ENCODE measurements at regions of chr22 and their contacts with region 1.

Region 1: DNA sequence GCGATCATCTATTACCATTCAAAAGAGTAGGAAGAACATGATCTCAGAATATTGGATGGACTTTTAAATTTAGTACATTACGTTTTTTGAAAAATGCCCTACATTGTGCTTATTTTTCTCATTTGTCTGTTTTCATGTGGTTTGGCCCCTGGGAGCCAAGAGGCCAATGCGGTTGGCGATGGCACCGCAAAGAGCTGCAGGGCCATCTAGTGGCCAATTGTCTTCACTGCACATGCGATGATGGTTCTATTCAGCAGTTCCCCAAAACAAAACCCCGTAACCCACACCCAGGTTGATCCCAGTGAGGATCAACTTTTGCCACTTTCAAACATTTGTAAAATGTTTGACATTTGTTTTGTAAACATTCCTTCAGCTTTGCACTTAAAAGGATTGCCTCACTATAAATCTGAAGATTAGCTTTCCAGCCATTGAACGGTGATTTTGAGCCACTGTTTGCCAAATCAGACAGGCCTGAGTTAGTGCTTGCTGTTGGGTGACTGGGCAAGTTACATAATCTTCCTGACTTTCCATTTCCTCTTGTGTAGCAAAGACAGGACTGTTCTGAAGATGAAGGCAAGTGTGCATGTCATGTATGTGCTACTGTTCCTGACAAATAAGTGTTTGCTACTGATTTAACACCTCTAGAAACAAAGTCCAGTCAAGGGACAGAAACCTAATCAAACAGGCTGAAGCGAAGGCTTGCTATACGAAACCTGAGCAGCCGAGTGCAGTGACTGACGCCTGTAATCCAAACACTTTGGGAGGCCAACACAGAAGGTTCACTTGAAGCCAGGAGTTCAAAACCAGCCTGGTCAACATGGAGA is 29.2 kb upstream of the XBP1 start:
- DNase-seq: peak; percentile 84
- ATAC-seq: peak; percentile 72
- H3K4me3 Mint-ChIP-seq: no peak overlapping the region
- H3K27ac Mint-ChIP-seq: no peak overlapping the region
- H3K4me1 Mint-ChIP-seq: peaks cover 18% of the 10 kb centered on the region
- H3K27me3 Mint-ChIP-seq: no peaks in the 10 kb centered on the region
- CTCF ChIP-seq: peak; percentile 98

Region 2: DNA sequence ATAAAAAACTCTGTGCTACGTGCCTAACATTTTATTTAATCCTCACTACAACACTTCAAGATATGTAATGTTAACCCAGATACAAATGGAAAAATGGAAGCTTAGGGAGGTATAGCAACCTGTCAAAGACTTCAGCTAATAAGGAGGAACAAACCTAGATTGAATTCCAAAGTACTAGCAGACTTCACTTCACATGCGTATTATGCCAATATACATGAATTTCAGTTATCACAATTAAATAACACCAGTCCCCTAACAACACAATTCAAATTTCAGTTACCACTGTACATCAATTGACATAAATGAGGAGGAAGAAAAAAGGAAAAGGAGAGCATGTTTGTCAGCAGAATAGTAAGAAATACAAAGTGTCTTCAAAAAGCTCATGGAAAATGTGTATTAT is 210.3 kb before region 1 on chr22:
- CTCF ChIA-PET with region 1: interaction called, 10 read pairs
- POLR2A ChIA-PET with region 1: no interaction called
- intact Hi-C with region 1: no loop called
- DNase-seq: no peak
- ATAC-seq: no peak
- H3K4me3 Mint-ChIP-seq: no peak overlapping the region
- H3K27ac Mint-ChIP-seq: no peak overlapping the region
- H3K4me1 Mint-ChIP-seq: no peaks in the 10 kb centered on the region
- H3K27me3 Mint-ChIP-seq: peaks cover 32% of the 10 kb centered on the region
- CTCF ChIP-seq: no peak

Region 3: DNA sequence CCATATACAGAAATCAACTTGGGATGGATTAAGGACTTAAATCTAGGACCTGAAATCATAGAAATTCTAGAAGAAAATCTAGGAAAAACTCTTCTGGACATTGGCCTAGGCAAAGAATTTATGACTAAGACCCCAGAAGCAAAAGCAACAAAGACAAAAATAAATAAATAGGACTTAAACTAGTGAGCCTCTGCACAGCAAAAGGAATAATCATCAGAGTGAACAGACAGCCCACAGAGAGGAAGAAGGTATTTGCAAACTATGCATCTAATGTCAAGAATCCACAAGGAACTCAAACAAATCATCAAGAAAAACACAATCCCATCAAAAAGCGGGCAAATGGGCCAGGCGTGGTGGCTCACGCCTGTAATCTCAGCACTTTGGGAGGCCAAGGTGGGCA is 182.4 kb before region 1 on chr22:
- CTCF ChIA-PET with region 1: no interaction called
- POLR2A ChIA-PET with region 1: no interaction called
- intact Hi-C with region 1: no loop called
- DNase-seq: no peak
- ATAC-seq: no peak
- H3K4me3 Mint-ChIP-seq: no peak overlapping the region
- H3K27ac Mint-ChIP-seq: no peak overlapping the region
- H3K4me1 Mint-ChIP-seq: no peaks in the 10 kb centered on the region
- H3K27me3 Mint-ChIP-seq: peaks cover 49% of the 10 kb centered on the region
- CTCF ChIP-seq: no peak

Region 4: DNA sequence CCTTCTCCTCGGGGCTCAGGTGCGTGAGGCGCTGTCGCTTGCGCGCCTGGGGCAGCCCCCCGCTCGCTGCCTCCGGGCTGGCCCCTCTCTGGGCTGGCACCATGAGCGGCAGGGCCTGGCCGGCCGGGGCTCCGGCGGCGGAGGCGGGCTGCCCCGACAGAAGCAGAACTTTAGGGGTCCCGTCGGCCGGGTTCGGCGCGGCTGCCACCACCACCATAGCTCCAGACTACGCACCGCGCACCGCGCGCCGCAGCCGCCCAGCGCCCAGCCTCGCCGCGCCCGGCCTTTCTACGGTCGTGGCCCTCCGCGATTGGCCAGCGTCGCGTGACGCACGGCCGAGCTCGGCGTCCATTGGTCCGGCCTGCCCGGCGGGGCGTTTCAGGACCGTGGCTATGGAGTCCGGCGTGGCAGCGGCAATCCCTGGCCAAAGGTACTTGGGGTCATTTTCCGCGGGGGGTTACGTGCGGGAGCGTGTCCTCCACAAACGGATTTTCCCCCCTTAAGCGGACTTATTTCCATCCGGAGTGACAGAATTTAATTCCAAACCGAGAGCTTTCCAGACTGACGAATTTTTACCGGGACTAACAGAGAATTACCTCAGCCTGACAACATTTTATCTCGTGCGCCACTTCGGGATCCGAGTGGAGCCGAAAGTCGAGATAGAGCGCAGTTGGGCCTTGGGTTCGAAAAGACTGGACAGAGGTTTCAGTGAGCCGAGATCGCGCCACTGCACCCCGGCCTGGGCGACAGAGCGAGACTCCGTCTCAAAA is 29.1 kb before region 1 on chr22 and contains the start of gene XBP1:
- CTCF ChIA-PET with region 1: interaction called, 29 read pairs
- POLR2A ChIA-PET with region 1: interaction called, 8 read pairs
- intact Hi-C with region 1: no loop called
- DNase-seq: peak; percentile 89
- ATAC-seq: peak; percentile 89
- H3K4me3 Mint-ChIP-seq: peak within 1 kb of the TSS; percentile 95
- H3K27ac Mint-ChIP-seq: peak within 1 kb of the TSS; percentile 99
- H3K4me1 Mint-ChIP-seq: peaks cover 44% of the 10 kb centered on the region
- H3K27me3 Mint-ChIP-seq: no peaks in the 10 kb centered on the region
- CTCF ChIP-seq: no peak
- total RNA-seq, gene XBP1: 102 to 103 TPM

Region 5: DNA sequence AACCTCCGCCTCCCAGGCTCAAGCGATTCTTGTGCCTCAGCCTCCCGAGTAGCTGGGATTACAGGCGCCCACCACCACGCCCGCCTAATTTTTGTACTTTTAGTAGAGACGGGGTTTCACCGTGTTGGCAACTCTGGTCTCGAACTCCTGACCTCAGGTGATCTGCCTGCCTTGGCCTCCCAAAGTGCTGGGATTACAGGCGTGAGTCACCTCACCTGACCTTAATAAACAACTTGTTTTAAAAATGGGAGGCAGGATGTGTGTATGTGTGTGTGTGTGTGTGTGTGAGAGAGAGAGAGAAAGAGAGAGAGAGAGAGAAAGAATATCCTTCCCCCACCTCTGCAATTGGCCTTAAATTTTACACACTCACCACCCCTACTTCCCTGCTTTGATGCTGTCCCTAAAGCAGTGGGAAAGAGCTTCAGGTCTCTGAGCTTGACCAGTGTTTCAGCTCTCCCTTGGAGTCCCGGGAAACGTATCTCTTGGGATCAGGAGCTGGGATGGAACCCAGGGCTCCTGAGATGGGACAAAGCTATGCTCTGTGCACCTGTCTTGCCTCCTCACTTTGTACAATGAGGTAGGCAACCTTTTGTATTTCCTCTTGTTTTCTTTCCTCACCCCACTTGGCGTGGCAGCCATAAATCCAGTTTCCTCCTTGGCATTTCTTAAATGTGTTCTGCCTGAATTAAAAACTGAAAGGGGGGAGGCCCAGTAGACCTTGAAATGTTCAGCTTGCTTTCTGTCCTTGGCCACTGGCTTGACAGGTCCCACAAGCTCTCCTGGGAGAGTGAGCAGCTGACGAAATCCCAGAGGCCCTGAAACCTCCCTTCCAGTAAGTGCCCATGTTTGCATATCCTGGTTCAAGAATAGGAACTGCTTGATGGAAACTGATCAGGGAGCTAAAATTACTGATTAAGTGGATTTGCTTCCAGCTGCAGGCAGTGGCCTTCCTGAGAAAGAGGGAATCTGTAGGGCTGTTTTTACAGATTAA is 11.4 kb before region 1 on chr22:
- CTCF ChIA-PET with region 1: interaction called, 38 read pairs
- POLR2A ChIA-PET with region 1: interaction called, 4 read pairs
- intact Hi-C with region 1: no loop called
- DNase-seq: no peak
- ATAC-seq: peak; percentile 27
- H3K4me3 Mint-ChIP-seq: no peak overlapping the region
- H3K27ac Mint-ChIP-seq: no peak overlapping the region
- H3K4me1 Mint-ChIP-seq: peaks cover 62% of the 10 kb centered on the region
- H3K27me3 Mint-ChIP-seq: no peaks in the 10 kb centered on the region
- CTCF ChIP-seq: no peak